Naive thymus-derived CD4-positive, alpha-beta T cell (primary cell): ENCODE measurements at regions of chr19 and their contacts with region 1.

Region 1: DNA sequence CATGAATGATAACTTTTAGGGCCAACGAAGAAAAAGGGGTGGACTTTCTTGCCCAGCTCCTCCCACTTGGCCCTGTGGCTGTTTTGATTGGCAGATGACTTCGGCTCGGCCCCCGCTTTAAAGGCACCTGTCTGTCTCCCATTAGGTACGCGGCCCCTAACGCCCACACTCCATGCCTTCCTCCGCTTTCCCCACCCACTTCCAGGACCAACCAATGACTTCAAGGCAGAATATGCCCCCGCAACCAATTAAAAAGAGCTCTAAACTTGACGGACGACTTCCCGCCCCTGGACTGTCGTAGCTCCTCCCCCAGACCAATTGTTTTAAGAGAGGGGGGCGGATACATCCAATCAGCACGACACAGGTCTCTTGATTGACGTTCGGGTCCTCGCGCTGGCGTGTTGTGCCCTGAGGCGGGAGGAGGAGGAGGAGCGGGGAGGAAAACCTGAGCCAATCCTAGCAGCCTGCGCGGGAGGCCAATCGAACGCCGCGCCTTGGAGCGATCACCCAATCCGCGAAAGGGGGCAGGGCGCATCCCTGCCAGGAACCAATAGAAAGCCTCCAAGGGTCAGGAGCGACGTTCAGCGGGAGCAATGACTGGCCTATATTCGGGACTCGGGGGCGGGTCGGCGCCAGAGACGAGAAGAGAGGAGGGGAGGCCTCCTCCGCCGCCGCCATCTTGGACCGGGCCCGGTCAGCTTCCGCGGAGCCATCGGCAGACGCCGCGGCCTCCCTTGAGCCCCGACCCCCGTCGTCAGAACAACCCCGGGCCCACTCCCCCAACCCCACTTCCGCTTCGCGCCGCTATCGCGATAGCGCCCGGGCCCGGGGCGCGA is at the start of gene CNOT3:
- DNase-seq: peak; percentile 90 to 100 (median 100)
- ATAC-seq: peak; percentile 88
- H3K4me3 ChIP-seq: peak within 1 kb of the TSS; percentile 66
- H3K4me3 Mint-ChIP-seq: peak within 1 kb of the TSS; percentile 87 to 98 (median 90)
- H3K27ac ChIP-seq: peak within 1 kb of the TSS; percentile 97
- H3K27ac Mint-ChIP-seq: peak within 1 kb of the TSS; percentile 85 to 94 (median 92)
- H3K4me1 ChIP-seq: peaks cover 19 to 30% of the 10 kb centered on the region in 2 donors
- H3K4me1 Mint-ChIP-seq: peaks cover 33 to 60% (median 46%) of the 10 kb centered on the region in 7 donors
- H3K27me3 ChIP-seq: no peaks in the 10 kb centered on the region
- H3K27me3 Mint-ChIP-seq: no peaks in the 10 kb centered on the region
- total RNA-seq, gene CNOT3: 38.0 to 84.6 (median 63.9) TPM

Region 2: GRCh38 chr19:53881482-53882390 is 255.6 kb before region 1 on chr19 and contains the start of gene PRKCG:
- CTCF ChIA-PET with region 1: no interaction called
- POLR2A ChIA-PET with region 1: no interaction called
- intact Hi-C with region 1: no loop called
- DNase-seq: peak; percentile 60 to 75 (median 69)
- ATAC-seq: peak; percentile 47
- H3K4me3 ChIP-seq: peak within 1 kb of the TSS; percentile 47
- H3K4me3 Mint-ChIP-seq: peak within 1 kb of the TSS in 9 of 10 donors; percentile 10 to 54 (median 37)
- H3K27ac ChIP-seq: no peak within 1 kb of the TSS
- H3K27ac Mint-ChIP-seq: peak within 1 kb of the TSS in 1 of 9 donors; percentile 65
- H3K4me1 ChIP-seq: peaks cover 25 to 44% of the 10 kb centered on the region in 2 donors
- H3K4me1 Mint-ChIP-seq: peaks cover 15 to 39% (median 24%) of the 10 kb centered on the region in 7 donors
- H3K27me3 ChIP-seq: peaks cover 0 to 31% of the 10 kb centered on the region in 2 donors
- H3K27me3 Mint-ChIP-seq: peaks cover 21 to 35% (median 26%) of the 10 kb centered on the region in 5 donors
- total RNA-seq, gene PRKCG: 1.6 to 2.4 TPM in 2 of 5 experiments, not detected in the others

Region 3: GRCh38 chr19:54203151-54203611 is 65.9 kb after region 1 on chr19:
- CTCF ChIA-PET with region 1: no interaction called
- POLR2A ChIA-PET with region 1: interaction called, 17 read pairs
- intact Hi-C with region 1: loop called (anchors 1 kb)
- DNase-seq: no peak
- ATAC-seq: no peak
- H3K4me3 ChIP-seq: no peak overlapping the region
- H3K4me3 Mint-ChIP-seq: peak overlapping the region in 9 of 10 donors; percentile 25 to 99 (median 98)
- H3K27ac ChIP-seq: peak overlapping the region; percentile 46
- H3K27ac Mint-ChIP-seq: peak overlapping the region in 3 of 9 donors; percentile 16 to 46 (median 38)
- H3K4me1 ChIP-seq: peaks cover 45 to 53% of the 10 kb centered on the region in 2 donors
- H3K4me1 Mint-ChIP-seq: peaks cover 30 to 86% (median 78%) of the 10 kb centered on the region in 7 donors
- H3K27me3 ChIP-seq: no peaks in the 10 kb centered on the region
- H3K27me3 Mint-ChIP-seq: peaks cover 0 to 4% (median 0%) of the 10 kb centered on the region in 5 donors

Region 4: GRCh38 chr19:54339646-54340358 is 202.5 kb after region 1 on chr19:
- CTCF ChIA-PET with region 1: no interaction called
- POLR2A ChIA-PET with region 1: no interaction called
- intact Hi-C with region 1: no loop called
- DNase-seq: no peak
- ATAC-seq: peak; percentile 61
- H3K4me3 ChIP-seq: no peak overlapping the region
- H3K4me3 Mint-ChIP-seq: no peak overlapping the region
- H3K27ac ChIP-seq: no peak overlapping the region
- H3K27ac Mint-ChIP-seq: peak overlapping the region in 1 of 9 donors; percentile 42
- H3K4me1 ChIP-seq: no peaks in the 10 kb centered on the region
- H3K4me1 Mint-ChIP-seq: peaks cover 0 to 19% (median 0%) of the 10 kb centered on the region in 7 donors
- H3K27me3 ChIP-seq: peaks cover 0 to 3% of the 10 kb centered on the region in 2 donors
- H3K27me3 Mint-ChIP-seq: peaks cover 0 to 14% (median 5%) of the 10 kb centered on the region in 5 donors

Region 5: DNA sequence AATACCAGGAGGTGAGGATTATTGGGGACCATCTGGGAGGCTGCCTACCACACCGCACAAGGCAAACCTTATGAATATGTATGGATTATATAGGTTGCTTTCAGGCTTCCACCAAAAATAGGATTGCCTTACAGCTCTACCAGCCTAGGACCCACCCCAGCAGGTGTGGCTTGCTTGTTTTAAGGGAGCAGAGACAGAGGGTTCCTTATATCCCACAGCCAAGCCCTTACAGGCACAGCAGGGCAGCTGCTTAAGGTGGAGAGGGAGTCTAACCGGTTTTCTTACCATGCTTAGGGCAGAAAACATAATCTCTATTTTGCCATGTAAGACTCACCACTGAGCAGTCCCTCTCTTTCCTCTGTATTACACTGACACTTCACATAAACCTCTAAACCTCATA is 261.9 kb after region 1 on chr19:
- CTCF ChIA-PET with region 1: no interaction called
- POLR2A ChIA-PET with region 1: no interaction called
- intact Hi-C with region 1: no loop called
- DNase-seq: no peak
- ATAC-seq: no peak
- H3K4me3 ChIP-seq: no peak overlapping the region
- H3K4me3 Mint-ChIP-seq: no peak overlapping the region
- H3K27ac ChIP-seq: no peak overlapping the region
- H3K27ac Mint-ChIP-seq: no peak overlapping the region
- H3K4me1 ChIP-seq: no peaks in the 10 kb centered on the region
- H3K4me1 Mint-ChIP-seq: no peaks in the 10 kb centered on the region
- H3K27me3 ChIP-seq: no peaks in the 10 kb centered on the region
- H3K27me3 Mint-ChIP-seq: peaks cover 0 to 6% (median 0%) of the 10 kb centered on the region in 5 donors

Region 6: GRCh38 chr19:54448774-54449700 is 311.7 kb after region 1 on chr19 and contains the start of gene LENG8:
- CTCF ChIA-PET with region 1: no interaction called
- POLR2A ChIA-PET with region 1: interaction called, 7 read pairs
- intact Hi-C with region 1: loop called in 1 of 2 experiments (anchors 1 kb)
- DNase-seq: peak; percentile 95 to 99 (median 98)
- ATAC-seq: peak; percentile 94
- H3K4me3 ChIP-seq: peak within 1 kb of the TSS; percentile 85
- H3K4me3 Mint-ChIP-seq: peak within 1 kb of the TSS; percentile 93 to 99 (median 97)
- H3K27ac ChIP-seq: peak within 1 kb of the TSS; percentile 94
- H3K27ac Mint-ChIP-seq: peak within 1 kb of the TSS; percentile 97 to 100 (median 100)
- H3K4me1 ChIP-seq: peaks cover 19 to 39% of the 10 kb centered on the region in 2 donors
- H3K4me1 Mint-ChIP-seq: peaks cover 31 to 61% (median 54%) of the 10 kb centered on the region in 7 donors
- H3K27me3 ChIP-seq: no peaks in the 10 kb centered on the region
- H3K27me3 Mint-ChIP-seq: peaks cover 0 to 3% (median 0%) of the 10 kb centered on the region in 5 donors
- total RNA-seq, gene LENG8: 238 to 685 (median 503) TPM